CD8-positive, alpha-beta T cell (primary cell): ENCODE measurements at regions of chr1 and their contacts with region 1.

Region 1: DNA sequence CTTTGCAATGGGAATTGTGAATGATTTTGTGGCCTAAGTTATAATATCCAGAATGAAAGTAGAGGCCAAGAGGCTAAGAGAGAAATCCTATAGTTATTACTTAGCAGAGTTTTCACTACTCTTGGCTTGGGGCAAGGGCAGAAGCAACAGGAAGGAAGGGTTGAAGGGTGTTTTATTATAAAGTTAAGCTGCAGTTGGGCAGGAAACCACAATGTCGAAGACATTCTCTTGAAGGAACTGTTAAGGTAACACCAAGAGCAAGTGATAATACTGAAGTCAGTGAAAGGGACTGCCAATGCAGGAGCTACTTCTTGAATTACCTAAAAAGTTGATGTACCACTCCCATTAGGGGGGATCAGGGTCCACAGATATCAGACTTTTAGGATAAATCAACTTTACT is 8.3 kb downstream of the XCL2 start:
- DNase-seq: peak in 3 of 9 experiments; percentile 40 to 84 (median 71)
- ATAC-seq: peak; percentile 79
- H3K4me3 ChIP-seq: peak overlapping the region; percentile 13 to 19
- H3K4me3 Mint-ChIP-seq: peak overlapping the region; percentile 54
- H3K27ac ChIP-seq: peak overlapping the region; percentile 37 to 77
- H3K27ac Mint-ChIP-seq: peak overlapping the region; percentile 83
- H3K4me1 ChIP-seq: peaks cover 66% of the 10 kb centered on the region
- H3K4me1 Mint-ChIP-seq: peaks cover 90% of the 10 kb centered on the region
- H3K27me3 ChIP-seq: no peaks in the 10 kb centered on the region
- H3K27me3 Mint-ChIP-seq: no peaks in the 10 kb centered on the region
- CTCF ChIP-seq: no peak

Region 2: DNA sequence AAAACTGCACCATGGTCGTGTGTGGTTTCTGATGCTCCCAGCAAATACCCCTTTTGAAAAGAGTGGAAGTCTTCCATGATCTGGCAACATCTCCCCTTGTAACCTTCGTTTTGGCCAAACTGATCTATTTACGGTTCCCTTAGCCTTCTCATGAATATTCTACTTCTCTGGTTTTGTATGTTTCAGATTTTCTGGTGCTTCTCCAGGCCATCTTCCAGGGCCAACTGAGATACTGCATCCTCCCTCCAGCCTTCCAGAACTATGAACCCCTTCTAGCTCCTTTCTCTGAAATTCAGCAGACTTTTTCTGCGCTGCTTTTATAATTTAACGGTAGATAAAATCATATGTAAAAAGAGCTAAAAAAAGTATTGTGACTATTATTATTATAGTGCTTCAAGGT is 89.5 kb before region 1 on chr1:
- CTCF ChIA-PET with region 1: interaction called, 22 read pairs
- POLR2A ChIA-PET with region 1: interaction called, 10 read pairs
- intact Hi-C with region 1: loop called in 1 of 2 experiments (anchors 1 kb)
- DNase-seq: no peak
- ATAC-seq: no peak
- H3K4me3 ChIP-seq: no peak overlapping the region
- H3K4me3 Mint-ChIP-seq: no peak overlapping the region
- H3K27ac ChIP-seq: no peak overlapping the region
- H3K27ac Mint-ChIP-seq: peak overlapping the region; percentile 39
- H3K4me1 ChIP-seq: peaks cover 51% of the 10 kb centered on the region
- H3K4me1 Mint-ChIP-seq: peaks cover 66% of the 10 kb centered on the region
- H3K27me3 ChIP-seq: no peaks in the 10 kb centered on the region
- H3K27me3 Mint-ChIP-seq: no peaks in the 10 kb centered on the region
- CTCF ChIP-seq: no peak

Region 3: DNA sequence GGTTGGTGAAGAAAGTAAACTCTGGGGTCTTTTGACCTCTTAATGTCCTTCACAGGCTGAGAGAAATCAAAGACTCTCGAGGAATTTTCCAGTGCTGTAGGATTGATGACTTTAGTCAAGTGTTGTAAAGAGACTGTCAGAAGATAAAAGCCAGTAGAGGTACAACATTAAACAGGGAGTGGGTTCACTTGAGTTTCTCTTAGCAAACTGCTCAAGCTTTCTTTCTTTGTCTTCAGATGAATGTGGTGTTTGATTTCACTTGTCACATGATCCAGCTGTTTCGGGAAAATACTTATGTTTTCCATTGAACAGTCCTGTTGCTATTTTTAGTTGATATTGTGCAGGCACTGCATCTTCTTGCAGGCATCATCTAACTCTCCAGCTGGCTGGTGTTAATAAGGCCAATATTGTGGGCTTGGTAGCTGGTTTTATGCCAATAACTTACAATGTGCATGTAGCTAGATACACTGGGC is 37.3 kb before region 1 on chr1:
- CTCF ChIA-PET with region 1: no interaction called
- POLR2A ChIA-PET with region 1: no interaction called
- intact Hi-C with region 1: no loop called
- DNase-seq: no peak
- ATAC-seq: no peak
- H3K4me3 ChIP-seq: no peak overlapping the region
- H3K4me3 Mint-ChIP-seq: no peak overlapping the region
- H3K27ac ChIP-seq: no peak overlapping the region
- H3K27ac Mint-ChIP-seq: no peak overlapping the region
- H3K4me1 ChIP-seq: no peaks in the 10 kb centered on the region
- H3K4me1 Mint-ChIP-seq: peaks cover 38% of the 10 kb centered on the region
- H3K27me3 ChIP-seq: no peaks in the 10 kb centered on the region
- H3K27me3 Mint-ChIP-seq: no peaks in the 10 kb centered on the region
- CTCF ChIP-seq: no peak

Region 4: GRCh38 chr1:168509875-168510791 is 25.4 kb before region 1 on chr1:
- CTCF ChIA-PET with region 1: interaction called, 3 read pairs
- POLR2A ChIA-PET with region 1: no interaction called
- intact Hi-C with region 1: loop called (anchors 1 to 2 kb)
- DNase-seq: peak in 5 of 9 experiments; percentile 18 to 88 (median 63)
- ATAC-seq: peak; percentile 57
- H3K4me3 ChIP-seq: no peak overlapping the region
- H3K4me3 Mint-ChIP-seq: peak overlapping the region; percentile 4
- H3K27ac ChIP-seq: peak overlapping the region in 1 of 2 experiments; percentile 65
- H3K27ac Mint-ChIP-seq: peak overlapping the region; percentile 84
- H3K4me1 ChIP-seq: peaks cover 56% of the 10 kb centered on the region
- H3K4me1 Mint-ChIP-seq: peaks cover 72% of the 10 kb centered on the region
- H3K27me3 ChIP-seq: no peaks in the 10 kb centered on the region
- H3K27me3 Mint-ChIP-seq: no peaks in the 10 kb centered on the region
- CTCF ChIP-seq: no peak

Region 5: DNA sequence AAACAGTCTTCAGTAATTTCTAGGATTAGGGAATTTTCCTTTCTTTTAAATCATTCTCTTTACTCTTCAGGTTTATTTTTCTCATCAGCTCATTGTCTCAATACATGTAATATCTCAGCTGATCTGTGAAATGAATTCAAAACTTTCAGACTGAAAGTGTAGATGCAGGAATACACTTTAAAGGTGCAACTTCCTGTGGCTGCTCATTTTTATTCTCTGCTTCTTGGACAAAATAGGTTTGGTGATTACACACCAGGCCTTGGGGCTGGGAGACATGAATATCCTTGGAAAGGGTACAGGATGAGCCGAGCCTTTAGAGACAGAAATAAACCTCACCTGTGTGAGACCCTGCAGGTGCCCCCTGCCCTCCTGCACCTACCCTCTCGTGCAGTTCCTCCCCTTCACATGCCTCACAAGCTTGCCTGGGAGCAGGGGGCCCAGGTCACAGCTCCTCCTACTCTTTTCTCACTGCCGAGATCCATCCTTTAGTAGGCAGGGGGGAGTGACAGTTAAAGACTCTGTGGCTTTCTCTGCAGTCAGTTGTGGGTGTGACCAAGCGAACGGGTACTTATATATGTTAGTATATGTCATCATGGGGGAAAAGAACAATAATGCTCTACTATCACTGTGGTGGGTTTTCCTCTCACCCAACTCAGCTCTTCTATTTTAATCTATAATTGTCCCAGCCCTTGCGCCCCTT is 15.3 kb before region 1 on chr1:
- CTCF ChIA-PET with region 1: interaction called, 6 read pairs
- POLR2A ChIA-PET with region 1: interaction called, 21 read pairs
- intact Hi-C with region 1: loop called (anchors 1 to 2 kb)
- DNase-seq: peak in 7 of 9 experiments; percentile 24 to 89 (median 66)
- ATAC-seq: peak; percentile 93
- H3K4me3 ChIP-seq: peak overlapping the region in 1 of 2 experiments; percentile 16
- H3K4me3 Mint-ChIP-seq: peak overlapping the region; percentile 69
- H3K27ac ChIP-seq: peak overlapping the region; percentile 7 to 65
- H3K27ac Mint-ChIP-seq: peak overlapping the region; percentile 92
- H3K4me1 ChIP-seq: peaks cover 63% of the 10 kb centered on the region
- H3K4me1 Mint-ChIP-seq: peaks cover 64% of the 10 kb centered on the region
- H3K27me3 ChIP-seq: no peaks in the 10 kb centered on the region
- H3K27me3 Mint-ChIP-seq: no peaks in the 10 kb centered on the region
- CTCF ChIP-seq: no peak

Region 6: GRCh38 chr1:168553680-168554553 is 18.4 kb after region 1 on chr1:
- CTCF ChIA-PET with region 1: interaction called, 3 read pairs
- POLR2A ChIA-PET with region 1: interaction called, 3 read pairs
- intact Hi-C with region 1: loop called in 1 of 2 experiments (anchors 2 kb)
- DNase-seq: peak in 2 of 9 experiments; percentile 23 to 44
- ATAC-seq: peak; percentile 23
- H3K4me3 ChIP-seq: no peak overlapping the region
- H3K4me3 Mint-ChIP-seq: peak overlapping the region; percentile 3
- H3K27ac ChIP-seq: peak overlapping the region in 1 of 2 experiments; percentile 34
- H3K27ac Mint-ChIP-seq: peak overlapping the region; percentile 66
- H3K4me1 ChIP-seq: peaks cover 31% of the 10 kb centered on the region
- H3K4me1 Mint-ChIP-seq: peaks cover 61% of the 10 kb centered on the region
- H3K27me3 ChIP-seq: no peaks in the 10 kb centered on the region
- H3K27me3 Mint-ChIP-seq: no peaks in the 10 kb centered on the region
- CTCF ChIP-seq: no peak

Region 7: GRCh38 chr1:168603501-168604110 is 68.1 kb after region 1 on chr1:
- CTCF ChIA-PET with region 1: interaction called, 13 read pairs
- POLR2A ChIA-PET with region 1: interaction called, 3 read pairs
- intact Hi-C with region 1: no loop called
- DNase-seq: peak; percentile 38 to 78 (median 68)
- ATAC-seq: peak; percentile 67
- H3K4me3 ChIP-seq: no peak overlapping the region
- H3K4me3 Mint-ChIP-seq: no peak overlapping the region
- H3K27ac ChIP-seq: no peak overlapping the region
- H3K27ac Mint-ChIP-seq: no peak overlapping the region
- H3K4me1 ChIP-seq: no peaks in the 10 kb centered on the region
- H3K4me1 Mint-ChIP-seq: no peaks in the 10 kb centered on the region
- H3K27me3 ChIP-seq: no peaks in the 10 kb centered on the region
- H3K27me3 Mint-ChIP-seq: no peaks in the 10 kb centered on the region
- CTCF ChIP-seq: peak; percentile 63

Region 8: DNA sequence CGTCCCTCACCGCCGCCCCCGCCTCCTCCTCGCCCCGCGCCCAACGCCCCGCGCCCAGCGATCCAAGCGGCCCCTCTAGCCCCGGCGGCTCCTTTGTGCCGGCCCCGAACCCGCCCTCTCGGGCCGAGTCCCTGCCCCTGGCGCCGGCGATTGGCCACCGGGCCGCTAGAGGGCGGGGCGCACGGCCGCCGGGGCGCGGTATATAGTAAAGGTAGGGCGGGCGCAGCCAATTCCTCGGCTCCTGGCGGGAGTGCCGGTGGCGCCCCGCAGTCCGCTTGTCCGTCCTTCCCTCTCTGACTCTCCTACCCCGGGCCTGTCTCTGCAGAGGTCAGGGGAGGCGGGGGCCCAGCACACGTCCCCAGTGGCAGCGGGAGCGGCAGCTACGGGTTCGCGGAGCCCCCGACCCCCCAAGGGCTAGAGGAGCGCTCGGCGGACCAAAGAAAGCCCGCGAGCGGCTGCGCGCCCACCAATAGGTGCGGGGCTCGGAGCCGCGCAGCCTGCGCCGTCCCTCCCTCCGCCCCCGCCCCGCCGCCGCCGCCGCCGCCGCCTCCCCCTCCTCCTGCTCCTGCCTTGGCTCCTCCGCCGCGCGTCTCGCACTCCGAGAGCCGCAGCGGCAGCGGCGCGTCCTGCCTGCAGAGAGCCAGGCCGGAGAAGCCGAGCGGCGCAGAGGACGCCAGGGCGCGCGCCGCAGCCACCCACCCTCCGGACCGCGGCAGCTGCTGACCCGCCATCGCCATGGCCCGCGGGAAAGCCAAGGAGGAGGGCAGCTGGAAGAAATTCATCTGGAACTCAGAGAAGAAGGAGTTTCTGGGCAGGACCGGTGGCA is 570.8 kb after region 1 on chr1 and contains the start of gene ATP1B1:
- CTCF ChIA-PET with region 1: no interaction called
- POLR2A ChIA-PET with region 1: no interaction called
- intact Hi-C with region 1: loop called in 1 of 2 experiments (anchors 5 kb)
- DNase-seq: peak; percentile 59 to 88 (median 78)
- ATAC-seq: peak; percentile 89
- H3K4me3 ChIP-seq: peak within 1 kb of the TSS; percentile 65 to 74
- H3K4me3 Mint-ChIP-seq: peak within 1 kb of the TSS; percentile 91
- H3K27ac ChIP-seq: no peak within 1 kb of the TSS
- H3K27ac Mint-ChIP-seq: peak within 1 kb of the TSS; percentile 23
- H3K4me1 ChIP-seq: peaks cover 24% of the 10 kb centered on the region
- H3K4me1 Mint-ChIP-seq: peaks cover 33% of the 10 kb centered on the region
- H3K27me3 ChIP-seq: peaks cover 0 to 2% of the 10 kb centered on the region in 2 experiments
- H3K27me3 Mint-ChIP-seq: peaks cover 4% of the 10 kb centered on the region
- CTCF ChIP-seq: peak; percentile 29
- total RNA-seq, gene ATP1B1: 2.6 to 3.0 TPM